CD4-positive, alpha-beta memory T cell (primary cell): ENCODE measurements at regions of chr19 and their contacts with region 1.

Region 1: GRCh38 chr19:42132851-42133528 is 744 bp upstream of the POU2F2 start:
- DNase-seq: peak; percentile 79 to 91 (median 84)
- H3K4me3 ChIP-seq: peak overlapping the region; percentile 43 to 97
- H3K4me3 Mint-ChIP-seq: peak overlapping the region; percentile 87 to 96 (median 92)
- H3K27ac ChIP-seq: peak overlapping the region; percentile 74
- H3K27ac Mint-ChIP-seq: peak overlapping the region; percentile 84 to 99 (median 88)
- H3K4me1 ChIP-seq: peaks cover 71% of the 10 kb centered on the region
- H3K4me1 Mint-ChIP-seq: peaks cover 39 to 87% (median 59%) of the 10 kb centered on the region in 4 donors
- H3K27me3 ChIP-seq: no peaks in the 10 kb centered on the region
- H3K27me3 Mint-ChIP-seq: no peaks in the 10 kb centered on the region

Region 2: DNA sequence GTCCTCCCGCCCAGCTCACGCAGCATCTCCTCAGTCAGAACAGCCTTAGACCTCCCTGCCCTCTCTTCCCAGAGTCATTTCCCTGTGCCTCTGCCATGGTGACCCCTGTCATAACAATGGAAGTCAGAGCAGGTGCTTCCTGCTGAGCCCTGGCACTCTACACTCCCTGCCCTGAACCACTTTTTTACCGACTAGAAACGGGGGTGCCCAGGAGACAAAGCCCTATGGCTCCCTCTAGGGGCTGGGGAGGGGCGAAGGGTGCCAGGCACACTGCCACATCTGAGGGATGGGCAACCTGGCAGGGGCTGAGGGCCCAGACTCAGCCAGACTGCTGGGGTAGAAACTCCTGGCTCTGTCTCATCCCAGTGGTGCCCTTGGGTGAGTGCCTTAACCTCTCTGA is 40.6 kb before region 1 on chr19:
- CTCF ChIA-PET with region 1: no interaction called
- POLR2A ChIA-PET with region 1: no interaction called
- intact Hi-C with region 1: no loop called
- DNase-seq: peak in 3 of 5 donors; percentile 22 to 39 (median 33)
- H3K4me3 ChIP-seq: no peak overlapping the region
- H3K4me3 Mint-ChIP-seq: peak overlapping the region in 1 of 8 donors; percentile 39
- H3K27ac ChIP-seq: no peak overlapping the region
- H3K27ac Mint-ChIP-seq: peak overlapping the region in 5 of 7 donors; percentile 64 to 87 (median 83)
- H3K4me1 ChIP-seq: peaks cover 8% of the 10 kb centered on the region
- H3K4me1 Mint-ChIP-seq: peaks cover 6 to 34% (median 17%) of the 10 kb centered on the region in 4 donors
- H3K27me3 ChIP-seq: no peaks in the 10 kb centered on the region
- H3K27me3 Mint-ChIP-seq: no peaks in the 10 kb centered on the region

Region 3: DNA sequence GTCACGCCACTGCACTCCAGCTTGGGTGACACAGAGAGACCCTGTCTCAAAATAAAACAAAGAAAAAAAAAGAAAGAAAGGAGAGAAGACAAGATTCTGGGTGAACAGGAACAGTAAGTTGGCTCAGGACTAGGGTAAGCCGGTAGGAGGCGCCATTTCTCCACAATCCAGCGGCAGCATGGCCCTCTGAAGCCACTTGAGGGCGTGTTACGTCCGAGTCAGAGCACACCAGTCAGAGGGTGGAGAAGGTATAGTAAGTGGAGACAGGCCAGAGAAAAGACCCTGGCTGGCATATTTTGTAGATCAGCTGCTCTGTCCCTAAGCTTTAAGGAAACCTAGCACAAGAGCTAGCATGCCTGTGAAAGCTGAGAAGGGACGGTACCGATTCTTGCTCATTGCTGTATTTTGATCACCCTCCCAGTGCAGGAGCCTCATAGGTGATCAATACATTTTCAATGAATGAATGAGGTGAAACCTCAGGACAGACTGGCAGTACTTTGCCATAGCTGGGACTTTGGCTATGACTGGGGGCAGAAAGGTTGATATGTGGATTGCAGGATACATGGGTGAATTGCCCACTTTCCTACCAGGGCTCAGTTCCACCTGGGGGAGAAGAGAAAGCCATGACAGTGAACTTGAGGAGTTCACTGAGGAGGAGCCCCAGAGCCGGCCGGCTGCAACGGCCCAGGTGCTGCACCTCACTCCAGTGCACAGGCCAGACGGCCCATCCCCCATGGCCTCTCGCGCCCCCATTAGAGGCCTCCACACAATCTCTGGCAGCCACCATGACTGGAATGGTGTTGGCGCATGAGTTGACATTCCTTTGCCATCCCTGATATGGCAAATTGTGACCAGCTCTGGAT is 24.2 kb before region 1 on chr19:
- CTCF ChIA-PET with region 1: interaction called, 48 read pairs
- POLR2A ChIA-PET with region 1: interaction called, 9 read pairs
- intact Hi-C with region 1: loop called (anchors 1 kb)
- DNase-seq: peak; percentile 83 to 86 (median 85)
- H3K4me3 ChIP-seq: no peak overlapping the region
- H3K4me3 Mint-ChIP-seq: no peak overlapping the region
- H3K27ac ChIP-seq: no peak overlapping the region
- H3K27ac Mint-ChIP-seq: peak overlapping the region; percentile 38 to 87 (median 65)
- H3K4me1 ChIP-seq: peaks cover 6% of the 10 kb centered on the region
- H3K4me1 Mint-ChIP-seq: peaks cover 5 to 11% (median 9%) of the 10 kb centered on the region in 4 donors
- H3K27me3 ChIP-seq: no peaks in the 10 kb centered on the region
- H3K27me3 Mint-ChIP-seq: no peaks in the 10 kb centered on the region

Region 4: GRCh38 chr19:42176990-42177685 is 44.1 kb after region 1 on chr19:
- CTCF ChIA-PET with region 1: interaction called, 10 read pairs
- POLR2A ChIA-PET with region 1: interaction called, 11 read pairs
- intact Hi-C with region 1: loop called (anchors 2 kb)
- DNase-seq: peak; percentile 75 to 79 (median 78)
- H3K4me3 ChIP-seq: peak overlapping the region in 1 of 2 donors; percentile 59
- H3K4me3 Mint-ChIP-seq: no peak overlapping the region
- H3K27ac ChIP-seq: no peak overlapping the region
- H3K27ac Mint-ChIP-seq: no peak overlapping the region
- H3K4me1 ChIP-seq: peaks cover 29% of the 10 kb centered on the region
- H3K4me1 Mint-ChIP-seq: peaks cover 10 to 29% (median 18%) of the 10 kb centered on the region in 4 donors
- H3K27me3 ChIP-seq: peaks cover 17% of the 10 kb centered on the region
- H3K27me3 Mint-ChIP-seq: peaks cover 4 to 11% of the 10 kb centered on the region in 2 donors

Region 5: GRCh38 chr19:42219812-42220750 is 87.1 kb after region 1 on chr19 and contains the start of gene ZNF526:
- CTCF ChIA-PET with region 1: interaction called, 6 read pairs
- POLR2A ChIA-PET with region 1: interaction called, 4 read pairs
- intact Hi-C with region 1: loop called (anchors 1 kb)
- DNase-seq: peak; percentile 95 to 97 (median 97)
- H3K4me3 ChIP-seq: peak within 1 kb of the TSS; percentile 82 to 86
- H3K4me3 Mint-ChIP-seq: peak within 1 kb of the TSS; percentile 96 to 100 (median 98)
- H3K27ac ChIP-seq: peak within 1 kb of the TSS; percentile 77
- H3K27ac Mint-ChIP-seq: peak within 1 kb of the TSS; percentile 94 to 99 (median 98)
- H3K4me1 ChIP-seq: peaks cover 45% of the 10 kb centered on the region
- H3K4me1 Mint-ChIP-seq: peaks cover 39 to 69% (median 53%) of the 10 kb centered on the region in 4 donors
- H3K27me3 ChIP-seq: no peaks in the 10 kb centered on the region
- H3K27me3 Mint-ChIP-seq: no peaks in the 10 kb centered on the region
- total RNA-seq, gene ZNF526: 26.7 to 28.8 TPM

Region 6: GRCh38 chr19:42283143-42284065 is 150.4 kb after region 1 on chr19:
- CTCF ChIA-PET with region 1: interaction called, 12 read pairs
- POLR2A ChIA-PET with region 1: interaction called, 10 read pairs
- intact Hi-C with region 1: loop called (anchors 1 kb)
- DNase-seq: peak; percentile 96 to 98 (median 97)
- H3K4me3 ChIP-seq: peak overlapping the region; percentile 1 to 60
- H3K4me3 Mint-ChIP-seq: no peak overlapping the region
- H3K27ac ChIP-seq: peak overlapping the region; percentile 77
- H3K27ac Mint-ChIP-seq: no peak overlapping the region
- H3K4me1 ChIP-seq: peaks cover 54% of the 10 kb centered on the region
- H3K4me1 Mint-ChIP-seq: peaks cover 32 to 37% (median 33%) of the 10 kb centered on the region in 4 donors
- H3K27me3 ChIP-seq: no peaks in the 10 kb centered on the region
- H3K27me3 Mint-ChIP-seq: no peaks in the 10 kb centered on the region

Region 7: GRCh38 chr19:42401365-42402303 is 268.6 kb after region 1 on chr19:
- CTCF ChIA-PET with region 1: interaction called, 6 read pairs
- POLR2A ChIA-PET with region 1: no interaction called
- intact Hi-C with region 1: loop called (anchors 1 kb)
- DNase-seq: peak; percentile 63 to 79 (median 68)
- H3K4me3 ChIP-seq: peak overlapping the region; percentile 23 to 52
- H3K4me3 Mint-ChIP-seq: peak overlapping the region; percentile 82 to 91 (median 84)
- H3K27ac ChIP-seq: peak overlapping the region; percentile 29
- H3K27ac Mint-ChIP-seq: peak overlapping the region; percentile 64 to 88 (median 78)
- H3K4me1 ChIP-seq: peaks cover 30% of the 10 kb centered on the region
- H3K4me1 Mint-ChIP-seq: peaks cover 26 to 53% (median 39%) of the 10 kb centered on the region in 4 donors
- H3K27me3 ChIP-seq: no peaks in the 10 kb centered on the region
- H3K27me3 Mint-ChIP-seq: no peaks in the 10 kb centered on the region